HCT116 (cell line): ENCODE measurements at regions of chr14 and their contacts with region 1.

Region 1: DNA sequence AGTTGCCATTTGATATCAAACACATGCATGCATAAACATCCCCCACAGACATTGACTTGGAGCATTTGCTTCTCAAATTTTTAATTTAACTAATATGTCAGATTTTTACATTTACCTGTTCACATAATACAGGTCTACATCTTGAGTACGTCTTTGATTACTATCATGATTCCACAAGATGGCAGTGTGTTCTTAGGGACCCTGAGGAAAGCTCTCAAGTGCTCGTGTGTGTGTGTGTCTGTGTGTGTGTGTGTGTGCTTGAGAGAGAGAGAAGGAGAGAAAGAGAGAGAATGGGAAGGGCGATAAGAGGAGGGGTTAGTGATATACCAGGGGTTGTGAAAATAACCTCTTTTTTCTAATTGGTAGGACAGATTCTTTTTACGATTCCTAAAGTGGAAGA is 167.1 kb upstream of the OR4E1 start:
- DNase-seq: peak; percentile 24
- ATAC-seq: peak; percentile 60; the same call in 1 of the 2 replicates
- H3K4me3 ChIP-seq: no peak overlapping the region
- H3K27ac ChIP-seq: no peak overlapping the region
- H3K4me1 ChIP-seq: no peaks in the 10 kb centered on the region
- H3K27me3 ChIP-seq: peaks cover 36% of the 10 kb centered on the region
- CTCF ChIP-seq: peak in 2 of 3 experiments; percentile 13 to 24; a peak in 1 of 6 replicates
- POLR2A ChIP-seq: no peak
- RAD21 ChIP-seq: no peak

Region 2: GRCh38 chr14:21780429-21781084 is 60.2 kb before region 1 on chr14:
- CTCF ChIA-PET with region 1: no interaction called
- POLR2A ChIA-PET with region 1: no interaction called
- RAD21 ChIA-PET with region 1: no interaction called
- intact Hi-C with region 1: no loop called
- DNase-seq: no peak
- ATAC-seq: no peak
- H3K4me3 ChIP-seq: no peak overlapping the region
- H3K27ac ChIP-seq: no peak overlapping the region
- H3K4me1 ChIP-seq: no peaks in the 10 kb centered on the region
- H3K27me3 ChIP-seq: peaks cover 26% of the 10 kb centered on the region
- CTCF ChIP-seq: no peak
- POLR2A ChIP-seq: no peak
- RAD21 ChIP-seq: no peak

Region 3: GRCh38 chr14:21852061-21852664 is 11.4 kb after region 1 on chr14:
- CTCF ChIA-PET with region 1: interaction called, 14 read pairs
- POLR2A ChIA-PET with region 1: no interaction called
- RAD21 ChIA-PET with region 1: no interaction called
- intact Hi-C with region 1: no loop called
- DNase-seq: peak; percentile 16
- ATAC-seq: peak; percentile 75
- H3K4me3 ChIP-seq: no peak overlapping the region
- H3K27ac ChIP-seq: no peak overlapping the region
- H3K4me1 ChIP-seq: no peaks in the 10 kb centered on the region
- H3K27me3 ChIP-seq: peaks cover 36% of the 10 kb centered on the region; the same call in 1 of the 2 replicates
- CTCF ChIP-seq: peak in 2 of 3 experiments; percentile 92; a peak in 4 of 6 replicates
- POLR2A ChIP-seq: no peak
- RAD21 ChIP-seq: no peak

Region 4: GRCh38 chr14:21882226-21882625 is 41.5 kb after region 1 on chr14:
- CTCF ChIA-PET with region 1: interaction called, 11 read pairs
- POLR2A ChIA-PET with region 1: no interaction called
- RAD21 ChIA-PET with region 1: no interaction called
- intact Hi-C with region 1: no loop called
- DNase-seq: no peak
- ATAC-seq: no peak
- H3K4me3 ChIP-seq: no peak overlapping the region
- H3K27ac ChIP-seq: no peak overlapping the region
- H3K4me1 ChIP-seq: no peaks in the 10 kb centered on the region
- H3K27me3 ChIP-seq: 0 out of 2 replicates have a peak, but pooled peaks cover 7% of the 10 kb centered on the region
- CTCF ChIP-seq: no peak
- POLR2A ChIP-seq: no peak
- RAD21 ChIP-seq: no peak

Region 5: GRCh38 chr14:22589096-22589839 is 748.5 kb after region 1 on chr14 and contains the start of gene DAD1:
- CTCF ChIA-PET with region 1: no interaction called
- POLR2A ChIA-PET with region 1: no interaction called
- RAD21 ChIA-PET with region 1: no interaction called
- intact Hi-C with region 1: no loop called
- DNase-seq: peak; percentile 98
- ATAC-seq: peak; percentile 94
- H3K4me3 ChIP-seq: peak within 1 kb of the TSS; percentile 71 to 93
- H3K27ac ChIP-seq: peak within 1 kb of the TSS; percentile 69
- H3K4me1 ChIP-seq: peaks cover 10 to 22% of the 10 kb centered on the region in 2 experiments
- H3K27me3 ChIP-seq: 0 out of 2 replicates have a peak, but pooled peaks cover 6% of the 10 kb centered on the region
- CTCF ChIP-seq: no peak
- POLR2A ChIP-seq: peak; percentile 94
- RAD21 ChIP-seq: no peak
- total RNA-seq, gene DAD1: 162 TPM

Region 6: GRCh38 chr14:22781586-22781991 is 940.8 kb after region 1 on chr14:
- CTCF ChIA-PET with region 1: no interaction called
- POLR2A ChIA-PET with region 1: no interaction called
- RAD21 ChIA-PET with region 1: no interaction called
- intact Hi-C with region 1: no loop called
- DNase-seq: no peak
- ATAC-seq: peak; percentile 31; the same call in 1 of the 2 replicates
- H3K4me3 ChIP-seq: no peak overlapping the region
- H3K27ac ChIP-seq: no peak overlapping the region
- H3K4me1 ChIP-seq: peaks cover 0 to 3% of the 10 kb centered on the region in 2 experiments; a peak in 2 of 4 replicates
- H3K27me3 ChIP-seq: no peaks in the 10 kb centered on the region
- CTCF ChIP-seq: no peak
- POLR2A ChIP-seq: no peak
- RAD21 ChIP-seq: no peak